Psoas muscle (tissue), 8 donors: ENCODE measurements at regions of chr4 and their contacts with region 1.

Region 1: DNA sequence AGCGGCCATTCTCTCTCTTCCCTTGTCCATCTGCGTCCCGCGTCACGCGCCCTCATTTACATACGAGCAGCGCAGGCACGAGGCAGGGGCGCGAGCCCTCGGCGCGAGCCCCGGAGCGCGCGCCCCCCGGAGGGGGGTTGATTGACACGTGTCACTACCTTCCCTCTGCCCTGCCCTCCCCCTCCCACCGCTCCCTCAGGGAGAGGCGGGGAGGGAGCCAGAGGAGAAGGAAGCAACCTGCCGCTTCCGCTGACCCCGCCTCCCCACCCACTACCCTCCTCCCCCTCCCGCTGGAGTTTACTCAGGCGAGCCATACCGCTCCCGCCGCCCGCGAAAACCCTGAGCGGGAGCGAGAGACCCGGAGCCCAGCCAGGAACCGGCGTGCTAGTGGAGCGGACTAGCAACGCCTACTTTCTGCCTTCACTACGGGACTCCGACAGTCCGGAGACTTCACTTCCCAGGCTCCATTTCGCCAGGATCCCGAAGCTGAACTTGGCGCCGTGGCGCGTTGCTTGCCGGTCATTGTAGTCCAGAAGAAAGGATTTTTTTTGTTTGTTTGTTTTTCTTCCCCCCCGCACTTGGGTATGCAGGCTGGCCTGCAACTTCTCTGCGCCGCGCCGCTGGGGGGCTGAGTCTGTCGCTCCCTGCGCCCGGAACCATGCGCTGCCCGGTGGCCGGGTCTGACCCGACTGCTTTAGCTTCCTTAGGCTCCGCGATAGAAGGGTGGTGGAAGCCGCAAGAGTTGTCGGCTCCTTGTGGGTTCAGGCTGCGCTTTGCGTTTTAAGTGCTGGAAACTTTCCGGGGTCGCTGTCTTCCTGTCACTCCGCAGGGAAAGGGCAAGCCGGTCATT is at the start of gene LCORL:
- DNase-seq: peak; percentile 92 to 96
- ATAC-seq: peak; percentile 93 to 95 (median 93)
- H3K4me3 ChIP-seq: peak within 1 kb of the TSS; percentile 92
- H3K27ac ChIP-seq: peak within 1 kb of the TSS; percentile 94
- H3K4me1 ChIP-seq: peaks cover 15% of the 10 kb centered on the region
- H3K27me3 ChIP-seq: no peaks in the 10 kb centered on the region
- CTCF ChIP-seq: peak; percentile 22
- total RNA-seq, gene LCORL: 5.3 to 7.5 (median 7.3) TPM

Region 2: GRCh38 chr4:17511950-17512795 is 509.8 kb before region 1 on chr4 and contains the start of gene QDPR:
- intact Hi-C with region 1: loop called in 1 of 2 experiments (anchors 10 kb)
- DNase-seq: peak; percentile 82 to 91
- ATAC-seq: peak; percentile 89 to 96 (median 95)
- H3K4me3 ChIP-seq: peak within 1 kb of the TSS; percentile 94
- H3K27ac ChIP-seq: peak within 1 kb of the TSS; percentile 78
- H3K4me1 ChIP-seq: peaks cover 12% of the 10 kb centered on the region
- H3K27me3 ChIP-seq: no peaks in the 10 kb centered on the region
- CTCF ChIP-seq: peak; percentile 57
- total RNA-seq, gene QDPR: 34.6 to 47.2 (median 39.7) TPM

Region 3: GRCh38 chr4:17636696-17637622 is 385.0 kb before region 1 on chr4:
- intact Hi-C with region 1: no loop called
- DNase-seq: peak; percentile 78 to 89
- ATAC-seq: peak; percentile 81 to 88 (median 84)
- H3K4me3 ChIP-seq: no peak overlapping the region
- H3K27ac ChIP-seq: no peak overlapping the region
- H3K4me1 ChIP-seq: no peaks in the 10 kb centered on the region
- H3K27me3 ChIP-seq: no peaks in the 10 kb centered on the region
- CTCF ChIP-seq: peak; percentile 92